IMR-90 (cell line): ENCODE measurements at regions of chr12 and their contacts with region 1.

Region 1: DNA sequence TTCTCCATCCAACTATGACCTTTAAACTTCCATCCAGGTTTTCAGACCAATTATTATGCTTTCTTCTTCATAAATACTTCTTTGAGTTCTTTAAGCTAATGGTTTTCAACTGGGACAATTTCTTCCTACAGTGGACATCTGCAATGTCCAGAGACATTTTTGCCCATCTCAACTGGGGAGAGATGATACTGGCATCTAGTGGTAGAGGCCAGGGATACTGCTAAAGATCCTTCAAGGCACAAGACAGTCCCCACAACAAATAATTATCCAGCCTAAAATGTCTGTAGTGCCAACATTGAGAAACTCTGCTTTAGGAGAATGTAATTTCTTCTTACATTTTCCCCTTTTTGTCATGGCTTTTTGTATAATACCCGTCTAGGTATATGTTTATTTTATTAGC is 10.6 kb downstream of the TRHDE start:
- DNase-seq: no peak
- ATAC-seq: peak; percentile 77
- H3K4me3 ChIP-seq: no peak overlapping the region
- H3K27ac ChIP-seq: no peak overlapping the region
- H3K4me1 ChIP-seq: peaks cover 9% of the 10 kb centered on the region
- H3K27me3 ChIP-seq: no peaks in the 10 kb centered on the region
- CTCF ChIP-seq: peak; percentile 58
- POLR2A ChIP-seq: no peak
- RAD21 ChIP-seq: peak; percentile 73

Region 2: DNA sequence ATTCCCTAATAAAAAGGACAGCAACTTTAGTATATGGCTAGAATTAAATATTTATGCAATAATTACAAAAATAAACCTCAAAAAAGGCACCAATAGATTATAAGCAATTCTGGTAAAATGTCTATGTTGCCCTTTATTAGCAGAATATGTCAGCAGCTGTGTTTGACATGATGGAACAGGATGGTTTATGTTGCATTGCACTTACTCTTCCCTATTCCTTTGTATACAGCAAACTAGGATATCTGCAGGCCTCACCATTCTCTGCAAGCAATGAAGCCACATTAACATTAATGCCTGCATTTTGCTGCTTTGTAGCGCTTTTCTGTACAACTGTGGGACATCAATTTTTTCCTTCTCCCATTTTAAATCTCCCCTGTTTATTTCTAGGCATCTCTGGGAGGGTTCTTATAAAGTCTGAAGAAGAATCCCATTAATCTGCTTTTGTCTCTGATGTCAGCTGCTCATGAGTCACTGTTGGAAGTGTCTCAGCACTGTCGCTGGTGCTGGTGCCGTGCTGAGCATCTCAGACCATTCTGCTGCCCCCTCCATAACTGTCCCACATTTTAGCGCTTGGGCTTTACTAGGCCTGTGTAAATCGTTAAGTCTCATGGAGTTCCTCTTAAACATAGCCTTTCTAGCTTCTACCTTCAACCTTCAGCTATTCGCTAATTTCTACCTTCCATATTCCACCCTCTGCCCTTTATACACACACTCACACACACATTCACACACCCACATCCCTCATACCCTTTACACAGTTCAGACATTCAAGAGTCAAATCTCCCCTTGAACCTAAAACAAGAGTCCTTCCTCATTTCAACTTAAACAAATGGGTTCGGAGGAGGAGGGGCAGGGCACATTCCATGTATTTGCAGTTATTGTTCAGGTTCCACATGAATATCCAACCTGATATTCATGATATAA is 75.0 kb before region 1 on chr12:
- CTCF ChIA-PET with region 1: no interaction called
- POLR2A ChIA-PET with region 1: no interaction called
- dilution Hi-C with region 1: no loop called
- in situ Hi-C with region 1: no loop called
- intact Hi-C with region 1: no loop called
- DNase-seq: no peak
- ATAC-seq: no peak
- H3K4me3 ChIP-seq: no peak overlapping the region
- H3K27ac ChIP-seq: no peak overlapping the region
- H3K4me1 ChIP-seq: peaks cover 2% of the 10 kb centered on the region; the same call in 1 of the 2 replicates
- H3K27me3 ChIP-seq: no peaks in the 10 kb centered on the region
- CTCF ChIP-seq: no peak
- POLR2A ChIP-seq: no peak
- RAD21 ChIP-seq: no peak

Region 3: GRCh38 chr12:72230589-72230988 is 52.1 kb before region 1 on chr12:
- CTCF ChIA-PET with region 1: no interaction called
- POLR2A ChIA-PET with region 1: no interaction called
- dilution Hi-C with region 1: no loop called
- in situ Hi-C with region 1: no loop called
- intact Hi-C with region 1: no loop called
- DNase-seq: peak; percentile 95
- ATAC-seq: peak; percentile 89
- H3K4me3 ChIP-seq: no peak overlapping the region
- H3K27ac ChIP-seq: peak overlapping the region; percentile 2; the same call in 1 of the 2 replicates
- H3K4me1 ChIP-seq: peaks cover 13% of the 10 kb centered on the region
- H3K27me3 ChIP-seq: no peaks in the 10 kb centered on the region
- CTCF ChIP-seq: no peak
- POLR2A ChIP-seq: no peak
- RAD21 ChIP-seq: no peak

Region 4: GRCh38 chr12:72264548-72265175 is 18.1 kb before region 1 on chr12:
- CTCF ChIA-PET with region 1: interaction called, 4 read pairs
- POLR2A ChIA-PET with region 1: interaction called, 17 read pairs
- dilution Hi-C with region 1: no loop called
- in situ Hi-C with region 1: no loop called
- intact Hi-C with region 1: no loop called
- DNase-seq: peak; percentile 48
- ATAC-seq: 0 out of 2 replicates have a peak, but pooled peaks have one; percentile 48
- H3K4me3 ChIP-seq: no peak overlapping the region
- H3K27ac ChIP-seq: no peak overlapping the region
- H3K4me1 ChIP-seq: peaks cover 3% of the 10 kb centered on the region; the same call in 1 of the 2 replicates
- H3K27me3 ChIP-seq: no peaks in the 10 kb centered on the region
- CTCF ChIP-seq: peak; percentile 57
- POLR2A ChIP-seq: no peak
- RAD21 ChIP-seq: peak; percentile 47

Region 5: DNA sequence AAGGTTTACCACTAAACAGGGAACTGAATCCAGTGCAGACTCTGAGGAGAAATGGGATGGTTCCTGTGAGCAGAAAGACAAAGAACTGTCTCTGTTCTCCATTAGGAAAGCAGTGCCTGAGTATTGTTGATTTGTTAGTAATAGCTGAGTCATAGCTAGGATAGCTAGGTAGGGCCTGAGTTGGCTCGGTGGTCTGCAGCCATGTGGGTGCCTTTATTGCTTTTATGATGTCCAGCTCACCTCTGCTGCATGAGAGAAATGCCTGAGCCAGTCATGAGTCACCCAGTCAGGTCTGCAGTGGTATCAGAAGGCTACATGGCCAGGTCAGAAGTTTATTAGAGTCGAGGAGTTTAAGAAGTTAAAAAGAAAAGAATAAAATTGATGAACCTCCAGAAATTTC is 13.7 kb after region 1 on chr12:
- CTCF ChIA-PET with region 1: interaction called, 11 read pairs
- POLR2A ChIA-PET with region 1: no interaction called
- dilution Hi-C with region 1: no loop called
- in situ Hi-C with region 1: no loop called
- intact Hi-C with region 1: no loop called
- DNase-seq: peak; percentile 91
- ATAC-seq: peak; percentile 47
- H3K4me3 ChIP-seq: no peak overlapping the region
- H3K27ac ChIP-seq: peak overlapping the region; percentile 78
- H3K4me1 ChIP-seq: peaks cover 31% of the 10 kb centered on the region
- H3K27me3 ChIP-seq: no peaks in the 10 kb centered on the region
- CTCF ChIP-seq: no peak
- POLR2A ChIP-seq: no peak; the same call in 1 of the 2 replicates
- RAD21 ChIP-seq: no peak